ENCODE measurements at regions of chr6 and their contacts with region 1.

Region 1: DNA sequence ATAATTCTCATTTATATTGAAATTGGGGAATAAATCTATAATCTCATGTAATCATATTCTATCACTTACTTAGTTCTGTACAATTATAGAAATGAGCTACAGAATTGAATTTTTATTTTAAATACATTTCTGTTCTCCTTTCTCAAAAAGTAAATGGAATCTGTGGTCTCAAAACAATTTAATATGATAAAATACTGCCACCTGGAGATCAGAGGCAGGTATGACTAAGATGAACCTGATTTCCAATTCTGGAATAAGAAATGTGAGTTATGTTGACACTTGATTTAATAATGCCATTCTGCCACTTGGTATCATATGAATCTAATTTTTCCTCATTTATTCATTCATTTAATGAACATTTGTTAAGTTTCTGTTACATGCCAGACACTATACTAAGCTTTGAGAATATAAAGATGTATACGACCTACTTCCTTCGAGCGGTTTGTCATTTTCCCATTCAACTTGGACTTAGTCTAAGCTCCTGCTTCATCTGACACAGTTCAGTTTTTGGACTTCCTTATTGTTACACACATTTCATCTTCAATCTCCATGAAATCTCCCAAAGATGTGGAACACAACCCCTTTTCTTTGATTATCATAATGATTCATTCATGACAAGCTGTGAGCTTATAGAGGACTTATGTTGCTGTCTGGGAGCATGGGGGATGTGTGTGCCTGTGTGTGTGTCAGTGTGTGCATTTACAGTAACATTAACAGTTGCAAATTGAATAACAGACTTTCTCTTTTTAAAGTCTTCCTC is 7.5 kb upstream of the CCDC28A start:
- DNase-seq: no peak
- ATAC-seq: no peak
- H3K4me3 ChIP-seq: no peak overlapping the region
- H3K27ac ChIP-seq: no peak overlapping the region
- H3K4me1 ChIP-seq: no peaks in the 10 kb centered on the region
- H3K27me3 ChIP-seq: no peaks in the 10 kb centered on the region

Region 2: DNA sequence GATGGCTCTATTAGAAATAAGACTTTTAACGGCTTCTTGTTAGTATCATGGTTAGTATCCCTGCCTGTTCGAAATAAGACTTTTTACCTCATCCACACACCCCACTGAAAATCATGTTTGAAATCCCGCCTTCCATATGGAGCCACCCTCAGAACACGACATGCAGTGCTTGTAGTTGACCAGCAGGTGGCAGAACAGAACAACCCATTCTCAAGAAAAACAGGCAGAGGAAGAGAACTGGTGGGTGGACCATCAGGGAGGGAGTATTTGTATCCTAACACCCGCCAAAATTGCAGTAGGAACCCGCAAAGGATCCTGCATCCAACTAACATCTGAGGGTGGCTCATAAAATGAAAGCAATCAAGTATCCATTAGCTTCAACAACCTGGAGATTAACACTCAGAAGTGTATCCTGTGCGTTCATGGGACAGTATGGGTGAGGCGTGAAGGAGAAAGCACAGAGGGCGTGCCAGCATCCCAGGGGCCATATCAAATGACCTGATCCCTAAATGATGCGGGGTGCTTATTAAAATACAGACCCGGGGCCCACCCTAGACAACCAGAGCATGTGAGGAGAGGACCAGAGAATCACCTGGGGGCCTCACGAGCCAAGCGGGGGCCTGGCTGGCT is 177.2 kb before region 1 on chr6:
- intact Hi-C with region 1: loop called (anchors 5 to 10 kb)
- DNase-seq: peak in 2 of 3 donors; percentile 47 to 77
- ATAC-seq: peak; percentile 53 to 56
- H3K4me3 ChIP-seq: no peak overlapping the region
- H3K27ac ChIP-seq: no peak overlapping the region
- H3K4me1 ChIP-seq: no peaks in the 10 kb centered on the region
- H3K27me3 ChIP-seq: no peaks in the 10 kb centered on the region

Region 3: DNA sequence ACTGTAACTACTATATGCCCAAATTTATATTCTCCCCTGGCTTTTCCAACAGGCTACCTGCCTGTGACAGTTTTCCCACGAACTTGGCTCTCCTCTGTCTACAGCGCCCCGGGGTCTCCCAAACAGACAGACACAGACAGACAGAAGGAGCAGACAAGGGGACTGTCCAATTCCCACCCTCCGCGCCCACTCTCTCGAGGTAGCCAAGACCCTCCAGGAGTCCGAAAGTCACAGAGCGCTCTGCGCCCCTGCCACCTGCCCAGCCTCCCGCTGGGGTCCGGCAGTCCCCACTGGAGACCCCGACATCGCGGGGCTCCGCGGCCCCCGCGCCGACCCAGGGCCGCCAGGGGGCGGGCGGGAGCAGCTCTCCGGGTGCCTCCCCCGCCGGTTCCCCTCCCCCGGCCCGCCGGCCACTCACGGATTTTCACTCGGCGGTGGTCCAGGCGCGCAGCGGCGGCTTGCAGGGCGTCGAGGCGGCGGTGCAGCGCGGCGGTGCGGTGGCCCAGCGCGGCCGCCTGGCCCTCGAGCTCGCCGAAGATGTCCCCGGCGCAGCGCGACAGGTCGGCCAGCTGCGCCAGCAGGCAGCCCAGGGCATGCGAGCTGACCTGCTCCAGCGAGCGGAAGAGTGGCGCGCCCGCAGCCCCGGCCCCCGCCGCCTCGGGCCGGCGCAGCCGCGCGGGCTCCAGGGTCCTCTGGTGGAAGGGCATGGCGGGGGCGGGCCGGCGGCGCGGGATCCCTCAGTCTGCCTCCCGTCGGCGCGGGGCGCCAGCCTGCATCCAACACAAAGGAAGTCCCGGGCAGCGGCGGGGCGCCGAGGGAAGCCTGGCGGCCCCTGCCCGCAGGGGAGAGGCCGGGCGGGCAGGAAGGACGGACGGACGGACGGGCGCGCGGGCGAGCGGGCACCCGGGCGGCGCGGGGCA is 73.8 kb before region 1 on chr6:
- intact Hi-C with region 1: loop called (anchors 5 kb)
- DNase-seq: peak; percentile 75 to 91 (median 90)
- ATAC-seq: peak; percentile 83 to 87
- H3K4me3 ChIP-seq: peak overlapping the region; percentile 68
- H3K27ac ChIP-seq: peak overlapping the region; percentile 32
- H3K4me1 ChIP-seq: peaks cover 3% of the 10 kb centered on the region
- H3K27me3 ChIP-seq: no peaks in the 10 kb centered on the region

Measured in right cardiac atrium (tissue), 5 donors.